ENCODE measurements at regions of chr9 and their contacts with region 1.

Region 1: GRCh38 chr9:89323390-89323789 is 5.1 kb downstream of the SECISBP2 start:
- DNase-seq: no peak
- ATAC-seq: no peak
- H3K4me3 ChIP-seq: no peak overlapping the region; the same call in 1 of the 2 replicates
- H3K27ac ChIP-seq: no peak overlapping the region; the same call in 1 of the 2 replicates
- H3K4me1 ChIP-seq: no peaks in the 10 kb centered on the region
- H3K27me3 ChIP-seq: no peaks in the 10 kb centered on the region
- CTCF ChIP-seq: no peak
- EP300 ChIP-seq: no peak
- POLR2A ChIP-seq: no peak
- RAD21 ChIP-seq: no peak

Region 2: GRCh38 chr9:88593537-88594185 is 729.7 kb before region 1 on chr9:
- CTCF ChIA-PET with region 1: no interaction called
- POLR2A ChIA-PET with region 1: no interaction called
- RAD21 ChIA-PET with region 1: no interaction called
- SMC1A ChIA-PET with region 1: no interaction called
- in situ Hi-C with region 1: no loop called
- intact Hi-C with region 1: no loop called
- DNase-seq: peak; percentile 20
- ATAC-seq: peak; percentile 89
- H3K4me3 ChIP-seq: no peak overlapping the region
- H3K27ac ChIP-seq: no peak overlapping the region
- H3K4me1 ChIP-seq: no peaks in the 10 kb centered on the region
- H3K27me3 ChIP-seq: 0 out of 4 replicates have a peak, but pooled peaks cover 0 to 3% of the 10 kb centered on the region in 2 experiments
- CTCF ChIP-seq: peak; percentile 45 to 66 (median 61)
- EP300 ChIP-seq: no peak
- POLR2A ChIP-seq: no peak
- RAD21 ChIP-seq: peak; percentile 84

Region 3: DNA sequence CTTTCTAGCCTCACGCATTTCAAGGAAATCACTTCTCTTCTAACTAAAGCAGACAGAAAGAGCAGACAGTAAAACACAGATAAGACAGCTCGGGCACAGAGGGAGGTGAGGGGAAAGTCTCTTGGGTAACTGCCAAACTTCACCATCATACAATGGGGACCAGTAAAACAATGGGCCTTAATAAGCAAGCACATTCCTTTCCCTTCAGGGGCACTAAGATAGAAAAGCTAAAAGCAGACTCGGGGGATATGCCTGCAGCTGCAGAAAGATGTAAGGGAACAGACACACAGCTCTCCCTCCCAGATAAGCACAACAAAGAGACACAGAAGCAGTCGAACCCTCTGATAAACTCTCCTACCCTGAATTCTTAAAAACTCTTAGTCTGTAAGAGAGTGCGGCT is 28.0 kb before region 1 on chr9:
- CTCF ChIA-PET with region 1: no interaction called
- POLR2A ChIA-PET with region 1: no interaction called
- RAD21 ChIA-PET with region 1: no interaction called
- SMC1A ChIA-PET with region 1: no interaction called
- in situ Hi-C with region 1: no loop called
- intact Hi-C with region 1: no loop called
- DNase-seq: no peak
- ATAC-seq: no peak
- H3K4me3 ChIP-seq: no peak overlapping the region
- H3K27ac ChIP-seq: no peak overlapping the region
- H3K4me1 ChIP-seq: no peaks in the 10 kb centered on the region
- H3K27me3 ChIP-seq: no peaks in the 10 kb centered on the region
- CTCF ChIP-seq: no peak
- EP300 ChIP-seq: no peak
- POLR2A ChIP-seq: no peak
- RAD21 ChIP-seq: no peak

Region 4: GRCh38 chr9:89340332-89340731 is 16.9 kb after region 1 on chr9:
- CTCF ChIA-PET with region 1: interaction called, 7 read pairs
- POLR2A ChIA-PET with region 1: interaction called, 4 read pairs
- RAD21 ChIA-PET with region 1: interaction called, 4 read pairs
- SMC1A ChIA-PET with region 1: interaction called, 20 read pairs
- in situ Hi-C with region 1: no loop called
- intact Hi-C with region 1: loop called (anchors 2 kb)
- DNase-seq: peak; percentile 45
- ATAC-seq: peak; percentile 97
- H3K4me3 ChIP-seq: peak overlapping the region; percentile 37; the same call in 1 of the 2 replicates
- H3K27ac ChIP-seq: peak overlapping the region; percentile 85
- H3K4me1 ChIP-seq: peaks cover 22% of the 10 kb centered on the region
- H3K27me3 ChIP-seq: no peaks in the 10 kb centered on the region
- CTCF ChIP-seq: no peak
- EP300 ChIP-seq: no peak
- POLR2A ChIP-seq: no peak
- RAD21 ChIP-seq: no peak